HAP-1 (cell line): ENCODE measurements at regions of chr4 and their contacts with region 1.

Region 1: GRCh38 chr4:152500800-152501434 is 35.0 kb downstream of the FBXW7 start:
- DNase-seq: peak; percentile 81 to 86
- H3K4me3 ChIP-seq: no peak overlapping the region
- H3K4me1 ChIP-seq: peaks cover 34% of the 10 kb centered on the region
- H3K27me3 ChIP-seq: no peaks in the 10 kb centered on the region

Region 2: DNA sequence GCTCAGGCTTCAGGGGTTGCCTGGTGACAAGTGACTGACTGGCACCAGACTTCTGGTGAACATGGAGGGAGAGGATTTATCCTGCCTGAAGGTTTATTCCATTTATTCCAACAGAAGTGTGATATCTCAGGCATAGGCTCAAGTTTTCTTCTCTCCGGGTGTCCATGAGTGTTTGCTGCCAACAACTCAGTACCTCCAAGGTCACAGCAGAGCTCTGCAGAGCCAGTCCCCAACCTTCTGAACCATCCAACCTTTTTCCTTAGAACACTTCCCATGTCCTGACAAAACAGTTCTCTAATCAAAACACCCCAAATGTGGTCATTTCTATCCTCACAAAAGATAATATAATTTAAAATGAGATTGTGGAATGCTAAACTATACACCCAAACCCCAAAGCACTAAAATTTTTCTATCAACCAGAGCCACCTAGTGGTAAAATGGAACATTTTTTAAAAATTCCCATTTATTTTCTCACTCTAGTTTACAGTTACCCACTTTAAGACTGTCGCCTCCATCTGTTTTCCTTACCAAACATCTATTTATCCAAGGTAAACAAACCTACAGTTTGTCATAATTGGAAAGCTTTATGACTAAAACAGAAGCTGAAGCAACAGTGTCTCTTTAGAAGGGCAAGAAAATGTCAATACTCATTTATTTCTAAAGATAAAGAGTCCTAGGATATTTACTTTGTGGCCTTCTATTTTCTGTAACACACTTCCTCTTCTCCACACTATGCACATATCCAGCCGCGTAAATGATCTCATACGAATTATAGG is 139.3 kb after region 1 on chr4:
- in situ Hi-C with region 1: loop called (anchors 10 kb)
- DNase-seq: peak in 1 of 2 experiments; percentile 35
- H3K4me3 ChIP-seq: no peak overlapping the region
- H3K4me1 ChIP-seq: no peaks in the 10 kb centered on the region
- H3K27me3 ChIP-seq: no peaks in the 10 kb centered on the region

Region 3: GRCh38 chr4:152735396-152735859 is 234.5 kb after region 1 on chr4:
- in situ Hi-C with region 1: loop called (anchors 5 kb)
- DNase-seq: peak in 1 of 2 experiments; percentile 60
- H3K4me3 ChIP-seq: no peak overlapping the region
- H3K4me1 ChIP-seq: peaks cover 10% of the 10 kb centered on the region
- H3K27me3 ChIP-seq: no peaks in the 10 kb centered on the region